Tibial artery (tissue), 4 donors: ENCODE measurements at regions of chr22 and their contacts with region 1.

Region 1: DNA sequence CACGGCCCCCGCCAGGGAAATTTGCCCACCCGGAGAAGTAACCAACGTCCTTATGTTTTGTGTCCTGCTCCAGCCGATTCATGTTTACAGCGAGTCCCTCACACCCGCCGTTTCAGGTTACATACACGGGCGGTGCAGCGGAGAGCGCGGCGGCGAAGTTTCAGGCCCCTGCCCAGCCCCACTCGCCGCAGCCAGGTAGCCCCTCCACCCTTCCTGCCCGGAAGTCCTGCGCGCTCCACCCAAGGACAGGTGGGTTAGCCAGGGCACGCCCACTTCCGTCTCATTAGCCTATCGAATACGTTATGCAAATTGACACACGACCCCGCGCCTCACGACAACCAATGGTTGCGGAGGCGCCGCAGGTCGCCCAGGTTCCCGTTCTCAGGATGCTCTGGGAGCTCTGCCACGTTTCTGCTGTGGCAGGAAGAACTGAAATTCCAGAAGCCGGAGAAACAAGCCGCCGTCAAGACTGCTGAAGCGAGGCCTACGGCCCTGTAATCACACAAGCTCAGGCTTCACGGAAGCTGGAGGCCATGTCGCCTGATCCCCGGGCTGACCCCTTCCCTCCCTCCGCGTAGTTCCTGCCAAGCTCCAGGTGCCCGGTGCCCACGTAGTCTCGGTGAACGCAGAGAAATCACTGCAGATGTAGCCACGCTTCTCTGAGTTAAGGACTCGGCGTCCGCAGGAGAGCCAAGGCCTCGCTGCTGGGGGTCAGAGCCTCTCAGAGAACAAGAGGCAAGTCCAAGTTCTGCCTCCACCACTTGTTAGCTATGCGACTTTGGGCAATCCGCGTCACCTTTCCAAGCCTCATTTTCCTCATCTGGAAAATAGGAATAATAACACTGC is 22.4 kb upstream of the MYH9 start:
- DNase-seq: peak; percentile 57 to 82
- H3K4me3 ChIP-seq: peak overlapping the region; percentile 32 to 35
- H3K27ac ChIP-seq: peak overlapping the region; percentile 9 to 50
- H3K4me1 ChIP-seq: peaks cover 0 to 12% (median 0%) of the 10 kb centered on the region in 4 donors
- H3K27me3 ChIP-seq: no peaks in the 10 kb centered on the region
- CTCF ChIP-seq: no peak

Region 2: GRCh38 chr22:36445158-36445668 is 35.1 kb after region 1 on chr22:
- intact Hi-C with region 1: loop called (anchors 5 kb)
- DNase-seq: no peak
- H3K4me3 ChIP-seq: no peak overlapping the region
- H3K27ac ChIP-seq: no peak overlapping the region
- H3K4me1 ChIP-seq: peaks cover 0 to 9% (median 3%) of the 10 kb centered on the region in 4 donors
- H3K27me3 ChIP-seq: no peaks in the 10 kb centered on the region
- CTCF ChIP-seq: no peak